Prostate gland (tissue), 2 donors: ENCODE measurements at regions of chr14 and their contacts with region 1.

Region 1: DNA sequence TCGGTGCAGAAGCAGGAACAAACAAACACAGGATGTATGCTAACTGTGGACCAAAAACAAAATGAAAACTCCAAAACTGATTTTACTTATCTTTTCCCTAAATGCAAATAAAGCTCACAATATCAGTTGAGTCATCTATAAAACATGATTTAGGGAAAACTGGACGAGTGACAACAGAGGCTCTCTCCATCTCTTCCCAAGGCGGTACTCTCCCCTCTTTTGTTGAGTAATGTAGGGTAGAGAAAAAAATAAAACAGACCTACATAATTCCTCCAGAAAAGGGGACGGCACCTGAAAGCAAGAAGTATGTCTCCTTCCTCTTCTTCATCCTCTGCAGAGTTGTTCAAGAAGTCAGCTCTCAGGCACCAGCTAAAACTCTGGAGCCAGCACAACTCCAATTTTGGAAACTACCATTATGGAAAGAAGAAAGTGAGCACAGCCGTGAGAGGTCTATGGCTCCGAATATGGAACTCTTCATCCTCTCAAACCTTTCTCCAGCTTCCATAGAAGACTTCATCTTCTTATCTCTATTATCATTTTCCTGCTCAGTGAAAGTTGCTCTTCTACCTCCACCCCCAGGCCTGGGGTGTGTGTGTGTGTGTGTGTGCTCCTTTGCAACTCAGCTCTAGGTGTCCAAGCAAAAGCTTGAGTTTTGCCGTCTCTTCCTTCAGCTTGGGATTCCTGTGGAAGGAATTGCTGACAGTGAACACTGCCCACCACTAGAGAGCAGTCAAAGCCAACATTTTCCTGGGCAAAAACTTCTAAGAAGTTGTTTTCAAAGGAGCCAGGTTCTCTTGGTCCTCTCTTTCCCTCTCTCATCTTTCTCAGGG is 155.4 kb downstream of the DIO2 start:
- DNase-seq: peak; percentile 29
- H3K4me3 ChIP-seq: no peak overlapping the region
- H3K27ac ChIP-seq: no peak overlapping the region
- H3K4me1 ChIP-seq: no peaks in the 10 kb centered on the region
- H3K27me3 ChIP-seq: no peaks in the 10 kb centered on the region
- CTCF ChIP-seq: peak; percentile 35 to 75 (median 72)
- POLR2A ChIP-seq: no peak

Region 2: DNA sequence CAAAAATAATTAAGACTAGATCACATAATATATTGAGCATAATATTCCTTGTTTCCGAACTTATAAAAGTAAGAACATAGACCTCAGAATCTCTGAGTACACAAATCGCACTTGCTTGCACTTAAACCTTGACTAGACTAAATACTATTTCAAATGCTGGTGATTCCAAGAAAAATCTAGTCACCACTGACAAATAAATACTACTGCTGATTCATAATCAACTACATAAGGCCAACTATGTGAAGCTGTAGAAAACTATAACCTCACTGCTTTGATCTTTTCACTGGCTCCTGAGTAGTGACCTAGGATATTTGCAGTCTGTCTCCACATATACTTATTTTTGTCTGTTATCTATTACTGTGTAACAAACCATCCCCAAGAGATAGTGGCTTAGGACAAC is 90.0 kb before region 1 on chr14:
- intact Hi-C with region 1: no loop called
- DNase-seq: no peak
- H3K4me3 ChIP-seq: no peak overlapping the region
- H3K27ac ChIP-seq: no peak overlapping the region
- H3K4me1 ChIP-seq: no peaks in the 10 kb centered on the region
- H3K27me3 ChIP-seq: no peaks in the 10 kb centered on the region
- CTCF ChIP-seq: no peak
- POLR2A ChIP-seq: no peak

Region 3: DNA sequence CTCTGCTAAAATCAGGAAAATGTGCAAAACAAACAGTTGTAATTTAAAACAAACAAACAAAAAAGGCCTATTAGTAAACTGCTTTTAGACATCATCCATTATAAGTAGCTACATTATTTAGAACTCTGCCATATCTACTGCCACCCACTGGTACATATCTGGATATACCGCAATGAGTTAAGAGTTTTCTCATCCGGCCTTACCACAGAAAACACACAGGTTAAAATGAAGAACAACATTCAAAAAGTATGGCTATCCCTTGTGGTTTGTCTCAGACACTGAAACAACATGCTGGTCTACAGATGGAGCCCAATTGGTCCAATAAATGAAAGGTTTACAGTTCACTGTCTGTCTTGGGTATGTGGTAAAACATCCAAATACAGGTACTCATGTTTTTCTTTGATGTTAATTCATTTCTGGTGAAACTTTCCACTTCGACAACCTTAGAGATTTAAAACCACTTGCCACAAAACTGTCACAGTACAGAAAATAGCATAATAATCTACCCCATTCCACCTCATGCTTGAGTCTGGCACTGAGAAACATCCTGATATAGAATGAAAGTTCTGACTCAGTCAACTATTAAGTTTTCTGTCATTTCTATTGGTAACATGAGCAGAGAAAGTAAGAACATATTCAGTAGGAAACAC is 531.3 kb after region 1 on chr14:
- intact Hi-C with region 1: loop called (anchors 10 kb)
- DNase-seq: no peak
- H3K4me3 ChIP-seq: no peak overlapping the region
- H3K27ac ChIP-seq: no peak overlapping the region
- H3K4me1 ChIP-seq: no peaks in the 10 kb centered on the region
- H3K27me3 ChIP-seq: no peaks in the 10 kb centered on the region
- CTCF ChIP-seq: peak in 3 of 4 experiments; percentile 33 to 47 (median 40)
- POLR2A ChIP-seq: no peak

Region 4: GRCh38 chr14:80850197-80850814 is 794.4 kb after region 1 on chr14:
- intact Hi-C with region 1: loop called (anchors 5 kb)
- DNase-seq: no peak
- H3K4me3 ChIP-seq: no peak overlapping the region
- H3K27ac ChIP-seq: no peak overlapping the region
- H3K4me1 ChIP-seq: no peaks in the 10 kb centered on the region
- H3K27me3 ChIP-seq: no peaks in the 10 kb centered on the region
- CTCF ChIP-seq: peak; percentile 27 to 72 (median 65)
- POLR2A ChIP-seq: no peak